ENCODE measurements at regions of chr2 and their contacts with region 1.

Region 1: DNA sequence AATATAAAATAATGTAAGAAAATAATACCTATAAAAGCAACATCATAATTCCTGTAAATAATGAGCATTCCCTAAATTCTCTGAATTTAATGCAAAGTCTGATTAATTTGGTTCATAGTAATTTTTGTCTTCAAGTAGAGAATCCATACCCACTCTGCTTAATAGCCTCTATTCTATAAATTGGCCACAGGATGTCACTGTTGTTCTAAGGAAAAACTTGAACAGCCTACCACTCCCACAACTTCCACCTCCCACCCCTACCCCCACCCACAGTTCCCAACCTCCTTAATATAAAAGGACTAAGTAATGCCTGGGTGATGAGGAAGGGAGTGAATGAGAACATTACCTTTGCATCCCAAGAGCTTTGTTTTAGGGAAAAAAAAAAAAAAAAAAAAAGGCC is 27.2 kb upstream of the BBS5 start:
- DNase-seq: no peak
- H3K4me3 ChIP-seq: no peak overlapping the region
- H3K27me3 ChIP-seq: no peaks in the 10 kb centered on the region
- CTCF ChIP-seq: peak; percentile 46

Region 2: DNA sequence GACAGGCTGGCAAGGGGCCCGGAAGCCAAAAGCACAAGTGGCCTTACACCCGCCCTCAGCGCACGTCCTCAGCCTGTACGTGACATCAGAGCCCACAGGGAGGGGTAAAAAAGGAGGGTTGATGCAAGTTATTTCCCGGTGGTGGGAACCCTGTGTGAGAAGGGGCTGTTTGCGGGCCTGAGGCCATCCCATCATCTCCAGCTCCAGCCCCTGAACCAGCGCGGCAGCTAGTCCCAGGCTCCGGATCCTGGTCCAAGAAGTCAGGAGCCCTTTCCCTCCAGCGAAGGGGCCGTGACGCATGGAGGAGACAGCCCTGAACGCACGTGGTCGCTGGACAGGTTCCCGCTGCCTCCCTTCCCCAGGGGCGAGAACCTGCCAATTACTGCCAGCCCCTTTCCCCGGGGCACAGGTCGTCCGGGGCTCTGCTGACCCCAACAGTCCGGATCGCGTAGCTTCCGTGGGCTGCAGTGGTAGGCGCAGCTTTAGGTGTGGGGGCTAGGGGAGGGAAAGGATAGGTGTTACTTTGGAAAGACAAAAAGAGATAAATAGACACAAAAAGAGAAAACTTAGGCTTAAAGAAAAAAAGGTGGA is 88.4 kb before region 1 on chr2:
- CTCF ChIA-PET with region 1: no interaction called
- POLR2A ChIA-PET with region 1: no interaction called
- DNase-seq: no peak
- H3K4me3 ChIP-seq: no peak overlapping the region; the same call in 1 of the 2 replicates
- H3K27me3 ChIP-seq: peaks cover 23% of the 10 kb centered on the region
- CTCF ChIP-seq: no peak

Region 3: GRCh38 chr2:169438460-169439072 is 13.5 kb before region 1 on chr2:
- CTCF ChIA-PET with region 1: interaction called, 11 read pairs
- POLR2A ChIA-PET with region 1: no interaction called
- DNase-seq: no peak
- H3K4me3 ChIP-seq: no peak overlapping the region
- H3K27me3 ChIP-seq: no peaks in the 10 kb centered on the region
- CTCF ChIP-seq: no peak

Region 4: DNA sequence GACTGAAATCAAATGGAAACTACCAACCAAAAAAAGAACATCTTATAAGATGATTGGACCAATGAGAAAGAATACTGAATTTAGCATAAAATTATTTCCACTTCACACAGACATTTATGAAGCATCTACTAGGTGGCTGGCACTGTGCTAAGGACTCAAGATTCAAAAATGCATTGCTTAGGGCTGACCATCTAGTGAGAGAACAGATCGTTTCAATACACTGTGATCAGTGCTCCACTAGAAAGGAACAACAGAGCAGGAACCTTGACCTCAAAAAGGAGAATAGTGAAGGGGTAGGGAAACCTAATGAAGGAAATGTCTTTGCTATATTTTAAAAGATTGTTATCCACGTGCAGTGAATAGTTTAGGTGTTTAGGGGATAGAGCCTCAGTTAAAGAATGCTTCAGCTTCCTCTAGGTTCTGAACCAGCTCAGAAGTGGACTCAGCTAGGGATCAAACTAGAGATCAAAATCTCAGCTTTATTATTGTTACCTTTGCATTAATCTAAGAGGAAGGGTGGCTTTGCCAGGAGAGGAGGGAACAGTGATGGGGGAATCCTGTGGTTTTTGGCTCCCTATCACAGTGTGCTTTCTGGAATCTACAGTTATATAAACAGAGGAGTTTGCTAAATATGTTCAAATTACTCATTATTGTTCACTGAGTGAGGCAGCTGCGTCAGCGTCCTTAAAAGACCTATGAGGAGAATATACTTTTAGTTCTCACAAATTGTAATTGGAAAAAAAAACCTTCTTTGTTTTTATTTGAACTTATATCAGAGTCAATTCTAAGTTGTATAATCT is 11.0 kb after region 1 on chr2:
- CTCF ChIA-PET with region 1: interaction called, 35 read pairs
- POLR2A ChIA-PET with region 1: no interaction called
- DNase-seq: peak; percentile 70
- H3K4me3 ChIP-seq: no peak overlapping the region
- H3K27me3 ChIP-seq: no peaks in the 10 kb centered on the region
- CTCF ChIP-seq: no peak

Region 5: GRCh38 chr2:169562519-169562918 is 110.4 kb after region 1 on chr2:
- CTCF ChIA-PET with region 1: no interaction called
- POLR2A ChIA-PET with region 1: no interaction called
- DNase-seq: no peak
- H3K4me3 ChIP-seq: no peak overlapping the region
- H3K27me3 ChIP-seq: no peaks in the 10 kb centered on the region
- CTCF ChIP-seq: no peak

Region 6: DNA sequence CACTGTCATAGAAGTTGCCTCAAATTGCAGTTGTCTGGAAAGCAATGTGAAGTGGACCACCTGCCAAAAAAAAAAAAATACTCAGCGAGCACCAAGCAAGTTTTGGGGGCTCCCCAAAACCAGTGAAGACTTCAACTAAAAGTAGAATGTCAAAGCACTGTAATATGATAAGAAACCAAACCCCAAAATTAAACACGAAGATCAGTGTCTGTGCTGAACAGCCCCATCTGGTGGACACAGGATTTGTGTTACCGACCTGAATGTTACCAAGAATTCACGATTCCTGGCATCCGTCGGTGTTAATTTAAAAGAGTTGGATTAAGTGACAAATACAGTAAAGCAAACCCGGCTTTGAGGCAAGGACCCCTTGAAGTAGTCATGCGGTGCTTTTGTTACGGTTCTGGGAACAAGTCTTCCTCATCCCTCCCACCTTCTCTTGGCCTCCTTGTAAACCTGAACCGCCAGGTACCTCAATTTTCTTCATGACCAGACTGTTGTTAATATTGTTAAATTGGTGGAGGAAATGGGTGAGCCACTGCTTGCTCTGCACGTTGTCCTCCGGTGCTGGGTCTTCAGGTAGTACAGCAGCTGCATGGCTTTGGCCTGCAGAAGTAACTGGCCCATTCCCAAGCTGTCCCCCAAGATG is 315.3 kb after region 1 on chr2:
- CTCF ChIA-PET with region 1: interaction called, 11 read pairs
- POLR2A ChIA-PET with region 1: no interaction called
- DNase-seq: no peak
- H3K4me3 ChIP-seq: no peak overlapping the region
- H3K27me3 ChIP-seq: peaks cover 8% of the 10 kb centered on the region
- CTCF ChIP-seq: peak; percentile 74

Region 7: DNA sequence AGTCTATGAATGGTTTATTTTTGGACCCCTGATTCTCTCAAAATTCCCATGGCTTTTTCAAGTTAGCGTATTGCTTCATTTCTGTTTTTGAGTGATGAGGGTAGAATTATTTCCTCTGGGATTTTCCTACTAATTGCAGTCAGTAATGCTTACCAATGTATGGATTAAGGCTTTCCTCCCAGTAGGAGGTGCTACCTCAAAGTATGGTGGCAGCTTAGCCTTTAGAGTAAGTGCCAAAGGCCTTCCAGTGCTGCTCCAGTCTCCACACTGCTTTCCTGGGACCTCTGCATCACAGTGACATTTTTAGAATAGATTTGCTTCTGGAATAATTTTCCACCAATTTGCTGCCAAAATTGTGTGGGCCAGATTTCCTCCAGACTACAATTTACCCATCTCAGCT is 330.4 kb after region 1 on chr2:
- CTCF ChIA-PET with region 1: interaction called, 11 read pairs
- POLR2A ChIA-PET with region 1: no interaction called
- DNase-seq: no peak
- H3K4me3 ChIP-seq: no peak overlapping the region
- H3K27me3 ChIP-seq: no peaks in the 10 kb centered on the region
- CTCF ChIP-seq: no peak